B cell (primary cell): ENCODE measurements at regions of chr19 and their contacts with region 1.

Region 1: GRCh38 chr19:14271840-14272239 is 65.9 kb upstream of the ADGRL1 start:
- DNase-seq: no peak
- ATAC-seq: no peak
- H3K4me3 ChIP-seq: no peak overlapping the region
- H3K4me3 Mint-ChIP-seq: no peak overlapping the region
- H3K27ac ChIP-seq: no peak overlapping the region
- H3K27ac Mint-ChIP-seq: no peak overlapping the region
- H3K4me1 ChIP-seq: no peaks in the 10 kb centered on the region
- H3K4me1 Mint-ChIP-seq: peaks cover 3% of the 10 kb centered on the region
- H3K27me3 ChIP-seq: peaks cover 0 to 4% (median 0%) of the 10 kb centered on the region in 4 experiments
- H3K27me3 Mint-ChIP-seq: peaks cover 13% of the 10 kb centered on the region
- CTCF ChIP-seq: no peak

Region 2: GRCh38 chr19:14366498-14366915 is 94.7 kb after region 1 on chr19:
- CTCF ChIA-PET with region 1: no interaction called
- POLR2A ChIA-PET with region 1: no interaction called
- intact Hi-C with region 1: no loop called
- DNase-seq: peak; percentile 91
- ATAC-seq: peak; percentile 47
- H3K4me3 ChIP-seq: no peak overlapping the region
- H3K4me3 Mint-ChIP-seq: peak overlapping the region; percentile 40
- H3K27ac ChIP-seq: peak overlapping the region; percentile 63 to 100
- H3K27ac Mint-ChIP-seq: peak overlapping the region; percentile 87
- H3K4me1 ChIP-seq: peaks cover 67 to 80% of the 10 kb centered on the region in 2 donors
- H3K4me1 Mint-ChIP-seq: peaks cover 61% of the 10 kb centered on the region
- H3K27me3 ChIP-seq: no peaks in the 10 kb centered on the region
- H3K27me3 Mint-ChIP-seq: no peaks in the 10 kb centered on the region
- CTCF ChIP-seq: no peak

Region 3: GRCh38 chr19:14383661-14384555 is 112.1 kb after region 1 on chr19:
- CTCF ChIA-PET with region 1: no interaction called
- POLR2A ChIA-PET with region 1: interaction called, 12 read pairs
- intact Hi-C with region 1: no loop called
- DNase-seq: peak; percentile 68
- ATAC-seq: peak; percentile 12
- H3K4me3 ChIP-seq: peak overlapping the region; percentile 19 to 90 (median 39)
- H3K4me3 Mint-ChIP-seq: peak overlapping the region; percentile 85
- H3K27ac ChIP-seq: peak overlapping the region; percentile 97 to 99
- H3K27ac Mint-ChIP-seq: peak overlapping the region; percentile 89
- H3K4me1 ChIP-seq: peaks cover 48 to 70% of the 10 kb centered on the region in 2 donors
- H3K4me1 Mint-ChIP-seq: peaks cover 51% of the 10 kb centered on the region
- H3K27me3 ChIP-seq: no peaks in the 10 kb centered on the region
- H3K27me3 Mint-ChIP-seq: no peaks in the 10 kb centered on the region
- CTCF ChIP-seq: no peak

Region 4: DNA sequence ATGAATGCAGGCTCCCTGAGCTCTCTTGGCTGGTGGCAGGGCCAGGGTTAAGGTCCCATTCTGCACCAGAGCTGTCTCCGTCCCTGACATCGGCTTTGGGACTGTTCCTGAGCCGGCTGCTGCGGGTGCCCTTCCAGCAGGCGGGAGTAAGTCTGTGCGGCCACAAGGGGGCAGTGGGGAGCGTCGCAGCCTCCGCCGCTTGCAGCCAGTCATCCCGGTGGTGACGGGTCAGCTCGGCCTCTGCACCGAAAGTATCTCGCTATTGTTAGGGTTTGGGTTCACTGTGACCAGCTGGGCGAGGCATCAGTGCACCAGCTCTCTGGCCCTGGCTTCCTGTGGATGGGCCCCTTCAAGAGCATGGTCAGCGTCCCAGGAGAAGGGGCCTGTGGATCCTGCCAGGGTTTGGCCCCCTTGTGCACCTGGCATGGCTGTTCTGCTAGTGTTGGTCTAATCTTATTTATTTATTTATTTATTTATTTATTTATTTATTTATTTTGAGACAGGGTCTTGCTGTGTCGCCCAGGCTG is 284.9 kb after region 1 on chr19:
- CTCF ChIA-PET with region 1: no interaction called
- POLR2A ChIA-PET with region 1: no interaction called
- intact Hi-C with region 1: no loop called
- DNase-seq: peak; percentile 80
- ATAC-seq: peak; percentile 82
- H3K4me3 ChIP-seq: no peak overlapping the region
- H3K4me3 Mint-ChIP-seq: peak overlapping the region; percentile 41
- H3K27ac ChIP-seq: no peak overlapping the region
- H3K27ac Mint-ChIP-seq: no peak overlapping the region
- H3K4me1 ChIP-seq: peaks cover 4 to 19% of the 10 kb centered on the region in 2 donors
- H3K4me1 Mint-ChIP-seq: peaks cover 30% of the 10 kb centered on the region
- H3K27me3 ChIP-seq: no peaks in the 10 kb centered on the region
- H3K27me3 Mint-ChIP-seq: no peaks in the 10 kb centered on the region
- CTCF ChIP-seq: peak; percentile 92